ENCODE measurements at regions of chr14 and their contacts with region 1.

Region 1: GRCh38 chr14:62103464-62103863 is 341.2 kb downstream of the SNAPC1 start:
- DNase-seq: no peak
- ATAC-seq: no peak
- H3K4me3 ChIP-seq: no peak overlapping the region
- H3K4me3 Mint-ChIP-seq: no peak overlapping the region
- H3K27ac ChIP-seq: no peak overlapping the region
- H3K27ac Mint-ChIP-seq: no peak overlapping the region
- H3K4me1 ChIP-seq: no peaks in the 10 kb centered on the region
- H3K4me1 Mint-ChIP-seq: no peaks in the 10 kb centered on the region
- H3K27me3 ChIP-seq: no peaks in the 10 kb centered on the region
- H3K27me3 Mint-ChIP-seq: peaks cover 6% of the 10 kb centered on the region
- CTCF ChIP-seq: no peak

Region 2: GRCh38 chr14:62053188-62053587 is 50.3 kb before region 1 on chr14:
- CTCF ChIA-PET with region 1: no interaction called
- POLR2A ChIA-PET with region 1: no interaction called
- intact Hi-C with region 1: loop called in 1 of 2 experiments (anchors 10 kb)
- DNase-seq: no peak
- ATAC-seq: no peak
- H3K4me3 ChIP-seq: no peak overlapping the region
- H3K4me3 Mint-ChIP-seq: no peak overlapping the region
- H3K27ac ChIP-seq: no peak overlapping the region
- H3K27ac Mint-ChIP-seq: no peak overlapping the region
- H3K4me1 ChIP-seq: no peaks in the 10 kb centered on the region
- H3K4me1 Mint-ChIP-seq: no peaks in the 10 kb centered on the region
- H3K27me3 ChIP-seq: no peaks in the 10 kb centered on the region
- H3K27me3 Mint-ChIP-seq: peaks cover 10% of the 10 kb centered on the region
- CTCF ChIP-seq: no peak